ENCODE measurements at regions of chr6 and their contacts with region 1.

Region 1: DNA sequence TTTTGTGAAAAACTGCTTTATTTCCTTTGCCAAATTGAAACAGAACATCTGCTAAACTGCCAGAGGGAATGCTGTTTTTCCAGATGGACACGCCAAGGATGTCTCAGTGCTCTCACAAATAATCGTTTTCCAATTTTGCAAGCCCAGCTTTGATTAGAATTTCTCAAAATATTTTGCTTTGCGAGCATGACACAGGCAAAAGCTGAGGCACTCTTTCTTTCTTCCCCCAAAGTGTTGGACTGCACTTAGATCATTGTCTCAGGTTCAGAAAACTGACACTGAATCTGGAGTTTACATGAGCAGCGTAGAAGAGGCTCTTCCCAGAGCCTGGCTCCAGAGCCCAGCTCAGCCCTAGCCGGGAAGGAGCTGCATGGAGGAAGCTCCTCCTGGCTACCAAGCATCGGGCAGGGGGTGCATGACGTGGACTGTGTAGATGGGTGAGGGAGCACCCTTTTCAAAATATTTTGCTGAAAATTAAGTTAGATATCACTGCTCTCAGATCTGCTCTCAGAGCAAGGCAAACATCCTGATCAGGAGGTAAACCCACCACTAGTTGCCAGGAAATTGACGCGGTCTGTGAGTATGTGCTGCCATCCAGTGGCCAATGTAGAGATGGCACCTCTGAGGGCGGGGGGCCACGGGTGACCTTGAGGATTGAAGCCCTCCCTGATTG is 107.5 kb downstream of the SLC22A3 start:
- DNase-seq: peak; percentile 54 to 78 (median 70)
- ATAC-seq: peak; percentile 93
- H3K4me3 ChIP-seq: no peak overlapping the region
- H3K4me3 Mint-ChIP-seq: no peak overlapping the region
- H3K27ac ChIP-seq: no peak overlapping the region
- H3K27ac Mint-ChIP-seq: no peak overlapping the region
- H3K4me1 ChIP-seq: peaks cover 29 to 30% of the 10 kb centered on the region in 2 donors
- H3K4me1 Mint-ChIP-seq: peaks cover 0 to 37% (median 27%) of the 10 kb centered on the region in 7 donors
- H3K27me3 ChIP-seq: no peaks in the 10 kb centered on the region
- H3K27me3 Mint-ChIP-seq: peaks cover 0 to 55% (median 5%) of the 10 kb centered on the region in 5 donors

Region 2: GRCh38 chr6:159720708-159721107 is 735.0 kb before region 1 on chr6:
- CTCF ChIA-PET with region 1: interaction called, 3 read pairs
- POLR2A ChIA-PET with region 1: no interaction called
- intact Hi-C with region 1: loop called in 1 of 2 experiments (anchors 1 kb)
- DNase-seq: peak in 7 of 9 donors; percentile 54 to 73 (median 65)
- ATAC-seq: peak; percentile 85
- H3K4me3 ChIP-seq: no peak overlapping the region
- H3K4me3 Mint-ChIP-seq: no peak overlapping the region
- H3K27ac ChIP-seq: no peak overlapping the region
- H3K27ac Mint-ChIP-seq: peak overlapping the region in 1 of 9 donors; percentile 32
- H3K4me1 ChIP-seq: peaks cover under 1 to 4% of the 10 kb centered on the region in 2 donors
- H3K4me1 Mint-ChIP-seq: peaks cover 12 to 33% (median 25%) of the 10 kb centered on the region in 7 donors
- H3K27me3 ChIP-seq: no peaks in the 10 kb centered on the region
- H3K27me3 Mint-ChIP-seq: no peaks in the 10 kb centered on the region

Region 3: DNA sequence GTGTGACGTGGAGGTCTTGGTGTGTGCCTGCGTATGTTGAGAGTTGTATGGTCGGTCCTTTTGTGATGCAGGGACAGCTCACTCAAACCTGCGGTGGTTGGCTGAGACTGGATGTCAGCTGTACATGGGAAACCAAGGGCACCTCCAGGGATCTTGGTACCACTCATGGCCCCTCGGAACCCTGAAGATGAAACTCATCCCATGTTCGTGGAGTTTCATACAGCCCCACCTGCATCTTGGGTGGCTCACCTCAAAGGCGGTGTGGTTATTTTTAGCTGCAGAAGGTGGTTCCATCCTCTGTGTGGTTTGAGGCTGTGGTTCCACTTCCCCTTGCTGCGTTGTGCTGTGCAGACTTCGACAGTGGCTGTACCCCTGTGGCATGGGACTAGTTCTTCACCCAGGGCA is 386.6 kb before region 1 on chr6:
- CTCF ChIA-PET with region 1: interaction called, 6 read pairs
- POLR2A ChIA-PET with region 1: no interaction called
- intact Hi-C with region 1: loop called (anchors 10 kb)
- DNase-seq: peak in 5 of 9 donors; percentile 9 to 36 (median 21)
- ATAC-seq: peak; percentile 63
- H3K4me3 ChIP-seq: peak overlapping the region; percentile 13
- H3K4me3 Mint-ChIP-seq: peak overlapping the region; percentile 18 to 69 (median 56)
- H3K27ac ChIP-seq: no peak overlapping the region
- H3K27ac Mint-ChIP-seq: peak overlapping the region in 3 of 9 donors; percentile 11 to 31 (median 17)
- H3K4me1 ChIP-seq: peaks cover 15 to 20% of the 10 kb centered on the region in 2 donors
- H3K4me1 Mint-ChIP-seq: peaks cover 24 to 63% (median 32%) of the 10 kb centered on the region in 7 donors
- H3K27me3 ChIP-seq: no peaks in the 10 kb centered on the region
- H3K27me3 Mint-ChIP-seq: no peaks in the 10 kb centered on the region

Region 4: DNA sequence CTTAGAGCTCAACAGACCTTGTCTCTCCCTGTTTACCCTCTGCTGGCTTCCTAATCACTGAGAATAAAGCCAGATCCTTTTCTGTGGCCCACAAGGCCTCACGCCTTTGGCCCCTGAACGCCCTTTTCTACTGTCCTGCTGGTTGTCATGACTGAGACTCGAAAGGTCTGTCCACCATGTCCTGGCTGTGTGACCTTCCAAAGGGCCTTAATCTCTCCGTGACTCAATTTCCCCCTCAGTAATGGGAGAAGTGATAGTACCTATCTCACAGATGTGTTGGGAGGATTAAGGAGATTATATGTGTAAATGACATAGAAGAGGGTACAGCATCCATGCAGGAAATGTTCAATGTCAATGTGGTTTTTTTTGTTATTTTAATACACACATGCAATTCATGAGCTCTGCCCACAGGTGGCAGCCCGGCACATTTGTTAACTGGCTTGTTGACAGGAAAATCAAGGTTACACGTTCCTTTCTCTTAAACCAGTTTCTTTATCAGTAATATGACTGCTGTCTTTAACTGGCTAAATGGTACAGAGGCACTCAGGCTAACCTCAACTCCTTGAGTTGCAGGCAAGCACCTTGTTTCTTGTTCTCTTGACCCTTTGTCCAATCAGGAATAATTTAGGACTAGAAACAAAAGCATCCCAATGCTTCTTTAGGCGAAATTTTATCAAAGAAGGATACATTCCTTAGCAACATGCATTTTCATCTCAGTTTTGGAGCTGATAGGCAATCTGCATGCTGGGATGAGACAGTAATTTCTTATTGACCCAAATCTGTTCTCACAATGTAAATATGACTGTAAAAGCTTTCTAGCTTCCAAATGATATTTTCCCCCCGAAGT is 317.5 kb before region 1 on chr6:
- CTCF ChIA-PET with region 1: interaction called, 22 read pairs
- POLR2A ChIA-PET with region 1: no interaction called
- intact Hi-C with region 1: loop called (anchors 1 kb)
- DNase-seq: peak; percentile 29 to 70 (median 61)
- ATAC-seq: peak; percentile 76
- H3K4me3 ChIP-seq: no peak overlapping the region
- H3K4me3 Mint-ChIP-seq: no peak overlapping the region
- H3K27ac ChIP-seq: no peak overlapping the region
- H3K27ac Mint-ChIP-seq: peak overlapping the region in 3 of 9 donors; percentile 9 to 65 (median 28)
- H3K4me1 ChIP-seq: peaks cover 0 to 4% of the 10 kb centered on the region in 2 donors
- H3K4me1 Mint-ChIP-seq: peaks cover 0 to 10% (median 9%) of the 10 kb centered on the region in 7 donors
- H3K27me3 ChIP-seq: no peaks in the 10 kb centered on the region
- H3K27me3 Mint-ChIP-seq: peaks cover 0 to 6% (median 0%) of the 10 kb centered on the region in 5 donors

Region 5: DNA sequence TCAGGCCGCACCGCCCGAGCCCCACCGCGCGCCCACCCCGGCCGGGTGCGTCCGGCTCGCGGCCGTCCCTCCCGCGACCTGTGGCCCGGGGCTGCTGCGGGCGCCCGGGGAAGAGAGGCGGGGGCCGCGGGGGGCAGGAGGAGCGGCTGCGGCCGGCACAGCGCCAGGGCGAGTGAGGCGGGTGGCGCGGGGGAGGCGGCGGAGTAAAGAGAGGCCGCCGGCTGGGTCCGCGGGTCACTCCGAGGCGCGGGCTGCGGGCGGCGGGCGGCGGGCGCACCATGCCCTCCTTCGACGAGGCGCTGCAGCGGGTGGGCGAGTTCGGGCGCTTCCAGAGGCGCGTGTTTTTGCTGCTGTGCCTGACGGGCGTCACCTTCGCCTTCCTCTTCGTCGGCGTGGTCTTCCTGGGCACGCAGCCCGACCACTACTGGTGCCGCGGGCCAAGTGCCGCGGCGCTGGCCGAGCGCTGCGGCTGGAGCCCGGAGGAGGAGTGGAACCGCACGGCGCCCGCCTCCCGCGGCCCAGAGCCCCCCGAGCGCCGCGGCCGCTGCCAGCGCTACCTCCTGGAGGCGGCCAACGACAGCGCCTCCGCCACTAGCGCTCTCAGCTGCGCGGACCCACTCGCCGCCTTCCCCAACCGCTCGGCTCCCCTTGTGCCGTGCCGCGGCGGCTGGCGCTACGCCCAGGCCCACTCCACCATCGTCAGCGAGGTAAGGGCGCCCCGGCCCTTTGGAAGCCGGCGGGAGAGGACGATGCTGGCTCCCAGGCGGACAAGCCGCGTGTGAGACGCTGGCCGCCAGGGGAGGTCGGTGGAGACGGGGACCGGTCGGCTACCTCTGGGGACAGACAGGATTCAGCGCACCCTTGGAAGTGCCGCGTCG is 107.3 kb before region 1 on chr6 and contains the start of gene SLC22A3:
- CTCF ChIA-PET with region 1: no interaction called
- POLR2A ChIA-PET with region 1: no interaction called
- intact Hi-C with region 1: no loop called
- DNase-seq: no peak
- ATAC-seq: no peak
- H3K4me3 ChIP-seq: no peak within 1 kb of the TSS
- H3K4me3 Mint-ChIP-seq: peak within 1 kb of the TSS in 8 of 10 donors; percentile 12 to 67 (median 54)
- H3K27ac ChIP-seq: no peak within 1 kb of the TSS
- H3K27ac Mint-ChIP-seq: no peak within 1 kb of the TSS
- H3K4me1 ChIP-seq: no peaks in the 10 kb centered on the region
- H3K4me1 Mint-ChIP-seq: peaks cover 0 to 21% (median 7%) of the 10 kb centered on the region in 7 donors
- H3K27me3 ChIP-seq: no peaks in the 10 kb centered on the region
- H3K27me3 Mint-ChIP-seq: peaks cover 48 to 75% (median 49%) of the 10 kb centered on the region in 5 donors
- total RNA-seq, gene SLC22A3: not detected

Region 6: DNA sequence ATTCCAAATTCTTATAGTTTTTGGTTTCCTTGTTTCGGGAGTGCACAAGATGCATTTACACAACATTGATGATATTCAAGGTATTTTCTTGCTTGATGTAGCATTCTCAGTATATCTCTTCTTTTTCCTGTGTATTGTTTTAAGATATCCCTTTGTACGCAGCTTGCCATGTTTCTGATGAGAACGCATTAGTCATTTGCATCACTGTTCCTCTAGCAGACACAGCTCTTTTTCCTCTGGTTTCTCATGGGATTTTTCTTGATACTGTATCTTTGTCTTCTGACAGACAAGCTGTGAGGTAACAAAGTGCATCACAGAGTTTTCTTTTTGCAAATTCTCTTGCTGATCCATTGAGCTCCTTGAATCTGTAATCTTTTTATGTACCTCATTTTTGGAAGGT is 38.9 kb after region 1 on chr6:
- CTCF ChIA-PET with region 1: no interaction called
- POLR2A ChIA-PET with region 1: no interaction called
- intact Hi-C with region 1: no loop called
- DNase-seq: no peak
- ATAC-seq: no peak
- H3K4me3 ChIP-seq: no peak overlapping the region
- H3K4me3 Mint-ChIP-seq: no peak overlapping the region
- H3K27ac ChIP-seq: no peak overlapping the region
- H3K27ac Mint-ChIP-seq: no peak overlapping the region
- H3K4me1 ChIP-seq: no peaks in the 10 kb centered on the region
- H3K4me1 Mint-ChIP-seq: peaks cover 0 to 6% (median 0%) of the 10 kb centered on the region in 7 donors
- H3K27me3 ChIP-seq: no peaks in the 10 kb centered on the region
- H3K27me3 Mint-ChIP-seq: peaks cover 0 to 43% (median 0%) of the 10 kb centered on the region in 5 donors

Region 7: GRCh38 chr6:160534050-160534696 is 78.5 kb after region 1 on chr6:
- CTCF ChIA-PET with region 1: no interaction called
- POLR2A ChIA-PET with region 1: no interaction called
- intact Hi-C with region 1: loop called (anchors 1 kb)
- DNase-seq: peak; percentile 2 to 55 (median 37)
- ATAC-seq: peak; percentile 86
- H3K4me3 ChIP-seq: no peak overlapping the region
- H3K4me3 Mint-ChIP-seq: no peak overlapping the region
- H3K27ac ChIP-seq: no peak overlapping the region
- H3K27ac Mint-ChIP-seq: no peak overlapping the region
- H3K4me1 ChIP-seq: no peaks in the 10 kb centered on the region
- H3K4me1 Mint-ChIP-seq: no peaks in the 10 kb centered on the region
- H3K27me3 ChIP-seq: no peaks in the 10 kb centered on the region
- H3K27me3 Mint-ChIP-seq: peaks cover 0 to 18% (median 5%) of the 10 kb centered on the region in 5 donors